ENCODE measurements at regions of chr17 and their contacts with region 1.

Region 1: DNA sequence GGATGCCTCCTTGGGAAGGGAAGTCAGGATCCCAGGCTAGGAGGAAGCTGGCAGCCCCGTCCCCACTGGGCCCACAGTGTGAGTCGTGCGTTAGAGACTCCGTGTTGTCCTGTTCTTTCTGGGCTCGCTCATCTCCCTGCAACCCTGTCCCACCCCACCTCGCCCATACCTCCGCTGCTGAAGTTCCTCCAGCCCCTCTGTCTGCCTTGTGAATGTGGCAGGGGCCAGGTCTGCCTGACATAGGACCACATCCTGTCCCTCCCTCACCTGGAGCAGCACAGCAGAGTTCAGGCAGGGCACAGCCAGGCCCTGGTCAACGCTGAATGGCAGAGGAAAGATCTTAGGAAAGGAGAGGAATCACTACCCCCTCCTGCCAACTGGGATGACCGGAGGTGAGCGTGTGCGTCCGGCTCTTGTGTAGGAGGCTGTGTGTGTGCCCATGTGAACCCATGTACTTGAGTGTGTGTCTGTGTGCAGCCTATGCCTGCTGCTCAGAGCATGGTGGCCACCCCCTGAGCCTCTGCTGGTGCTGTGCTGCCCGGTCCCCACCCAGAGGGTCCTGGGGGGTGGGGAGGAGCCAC is 12.8 kb downstream of the KCNJ18 start:
- DNase-seq: no peak
- ATAC-seq: no peak
- H3K4me3 ChIP-seq: no peak overlapping the region
- H3K27ac ChIP-seq: no peak overlapping the region
- H3K4me1 ChIP-seq: no peaks in the 10 kb centered on the region
- H3K27me3 ChIP-seq: no peaks in the 10 kb centered on the region
- CTCF ChIP-seq: no peak
- POLR2A ChIP-seq: no peak

Region 2: DNA sequence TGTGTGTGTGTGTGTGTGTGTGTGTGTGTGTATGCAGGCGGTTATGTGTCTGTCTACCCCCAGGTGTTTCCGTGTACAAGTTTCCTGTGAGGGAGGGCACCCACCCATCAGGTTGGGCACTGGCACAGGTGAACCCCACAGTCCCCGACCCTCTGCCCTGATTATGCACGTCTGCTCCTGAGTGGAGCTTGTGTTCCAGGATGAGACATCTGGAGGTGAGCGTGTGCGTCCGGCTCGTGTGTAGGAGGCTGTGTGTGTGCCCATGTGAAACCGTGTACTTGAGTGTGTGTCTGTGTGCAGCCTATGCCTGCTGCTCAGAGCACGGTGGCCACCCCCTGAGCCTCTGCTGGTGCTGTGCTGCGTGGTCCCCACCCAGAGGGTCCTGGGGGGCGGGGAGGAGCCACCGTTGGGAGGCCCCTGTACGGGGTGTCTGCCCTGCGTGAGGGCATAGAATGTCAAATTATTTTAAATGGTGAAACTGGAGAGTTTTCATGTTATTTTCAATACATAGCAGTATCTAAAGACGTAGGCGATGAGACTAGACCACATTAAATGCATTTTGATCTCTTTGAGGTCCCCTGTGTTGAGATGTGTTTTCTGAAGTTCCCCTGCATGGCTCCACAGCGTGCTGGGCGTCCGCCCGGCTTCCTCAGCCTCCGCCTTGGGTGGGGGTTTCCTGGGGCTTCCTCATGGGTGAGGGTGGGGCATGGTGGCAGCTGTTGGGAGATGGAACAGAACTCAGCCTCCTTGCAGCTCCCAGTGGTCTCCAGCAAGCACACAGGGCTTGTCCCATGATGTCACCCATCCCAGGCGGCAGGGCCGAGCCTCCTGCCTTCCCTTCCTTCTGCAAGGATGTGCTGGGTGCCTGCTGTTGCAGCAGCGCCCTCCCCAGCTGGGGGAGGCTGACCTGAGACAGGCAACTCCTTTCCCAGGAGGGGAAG is 285.5 kb before region 1 on chr17:
- in situ Hi-C with region 1: loop called (anchors 25 kb)
- intact Hi-C with region 1: no loop called
- DNase-seq: no peak
- ATAC-seq: no peak
- H3K4me3 ChIP-seq: no peak overlapping the region
- H3K27ac ChIP-seq: no peak overlapping the region
- H3K4me1 ChIP-seq: peaks cover 0 to 3% of the 10 kb centered on the region in 2 donors
- H3K27me3 ChIP-seq: no peaks in the 10 kb centered on the region
- CTCF ChIP-seq: no peak
- POLR2A ChIP-seq: no peak